ENCODE measurements at regions of chr3 and their contacts with region 1.

Region 1: DNA sequence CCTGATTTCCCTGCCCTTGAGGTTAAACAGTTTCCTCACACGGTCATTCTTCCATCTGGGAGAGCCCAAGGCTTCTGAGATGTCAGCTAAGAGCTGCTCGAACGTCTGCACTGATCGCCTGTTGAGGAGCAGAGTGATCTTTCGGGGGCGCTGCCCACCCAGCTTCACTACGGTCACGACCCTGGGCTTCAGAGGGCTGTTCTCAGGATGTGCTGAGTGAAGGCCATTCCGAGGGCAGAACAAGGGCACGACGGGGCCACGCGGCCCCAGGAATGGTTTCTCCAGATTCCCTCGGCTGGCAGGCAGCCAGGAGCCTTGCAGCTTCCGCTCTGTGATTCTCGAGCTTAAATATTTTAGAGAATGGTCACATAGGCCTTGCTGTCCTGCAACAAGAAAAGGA is 25.7 kb downstream of the DCLK3 start:
- DNase-seq: peak; percentile 60 to 84
- ATAC-seq: peak; percentile 50 to 87 (median 75)
- H3K4me3 ChIP-seq: no peak overlapping the region
- H3K27ac ChIP-seq: peak overlapping the region in 5 of 10 donors; percentile 38 to 50 (median 44)
- H3K4me1 ChIP-seq: peaks cover 0 to 38% (median 13%) of the 10 kb centered on the region in 9 donors
- H3K27me3 ChIP-seq: no peaks in the 10 kb centered on the region
- CTCF ChIP-seq: peak in 2 of 9 donors; percentile 11 to 19

Region 2: DNA sequence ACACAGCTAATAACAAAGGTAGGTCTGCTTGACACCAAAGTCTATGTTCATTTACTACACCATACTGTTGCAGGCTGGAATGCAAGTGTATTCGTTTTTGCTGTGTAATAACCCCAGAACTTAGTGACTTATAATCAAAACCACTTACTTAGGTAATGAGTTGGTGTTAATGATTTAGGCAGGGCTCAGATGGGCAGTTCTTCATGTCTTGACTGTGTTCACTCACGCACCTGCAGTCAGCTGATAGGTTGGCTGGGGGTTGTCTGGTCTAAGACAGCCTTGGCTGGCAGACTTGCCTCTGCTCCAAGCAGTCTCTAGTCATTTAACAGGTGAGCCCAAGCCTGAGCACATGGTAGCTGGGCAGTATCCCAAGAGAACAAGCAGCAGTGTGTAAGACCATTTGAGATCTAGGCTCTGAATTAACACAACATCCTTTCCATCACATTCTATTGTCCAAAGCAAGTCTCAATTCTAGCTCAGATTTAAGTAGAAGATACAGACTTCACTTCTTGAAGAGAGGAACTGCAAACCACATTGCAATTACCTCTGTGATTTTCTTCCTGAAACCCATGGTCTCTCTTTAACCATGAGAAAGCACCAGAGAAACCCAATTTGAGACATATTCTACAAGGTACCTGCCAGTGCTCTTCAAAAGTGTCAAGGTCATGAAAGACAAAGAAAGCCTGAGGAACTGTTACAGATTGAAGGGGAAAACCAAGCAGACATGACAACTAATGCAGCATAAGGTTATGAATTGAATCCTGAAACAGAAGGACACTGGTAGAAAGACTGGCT is 38.9 kb after region 1 on chr3:
- intact Hi-C with region 1: loop called in 2 of 10 experiments (anchors 5 kb)
- DNase-seq: no peak
- ATAC-seq: no peak
- H3K4me3 ChIP-seq: no peak overlapping the region
- H3K27ac ChIP-seq: no peak overlapping the region
- H3K4me1 ChIP-seq: peaks cover 0 to 8% (median 0%) of the 10 kb centered on the region in 9 donors
- H3K27me3 ChIP-seq: no peaks in the 10 kb centered on the region
- CTCF ChIP-seq: no peak